MCF 10A (cell line): ENCODE measurements at regions of chr4 and their contacts with region 1.

Region 1: GRCh38 chr4:90293320-90293719 is 166.1 kb downstream of the CCSER1 start:
- DNase-seq: no peak
- H3K4me3 Mint-ChIP-seq: no peak overlapping the region
- H3K27ac Mint-ChIP-seq: no peak overlapping the region
- H3K4me1 Mint-ChIP-seq: no peaks in the 10 kb centered on the region
- H3K27me3 Mint-ChIP-seq: no peaks in the 10 kb centered on the region
- CTCF ChIP-seq: peak; percentile 54

Region 2: GRCh38 chr4:89914609-89915550 is 378.4 kb before region 1 on chr4:
- CTCF ChIA-PET with region 1: interaction called, 5 read pairs
- POLR2A ChIA-PET with region 1: no interaction called
- intact Hi-C with region 1: loop called (anchors 1 kb)
- DNase-seq: peak; percentile 21
- H3K4me3 Mint-ChIP-seq: peak overlapping the region; percentile 41
- H3K27ac Mint-ChIP-seq: no peak overlapping the region
- H3K4me1 Mint-ChIP-seq: peaks cover 21% of the 10 kb centered on the region
- H3K27me3 Mint-ChIP-seq: no peaks in the 10 kb centered on the region
- CTCF ChIP-seq: peak; percentile 13

Region 3: DNA sequence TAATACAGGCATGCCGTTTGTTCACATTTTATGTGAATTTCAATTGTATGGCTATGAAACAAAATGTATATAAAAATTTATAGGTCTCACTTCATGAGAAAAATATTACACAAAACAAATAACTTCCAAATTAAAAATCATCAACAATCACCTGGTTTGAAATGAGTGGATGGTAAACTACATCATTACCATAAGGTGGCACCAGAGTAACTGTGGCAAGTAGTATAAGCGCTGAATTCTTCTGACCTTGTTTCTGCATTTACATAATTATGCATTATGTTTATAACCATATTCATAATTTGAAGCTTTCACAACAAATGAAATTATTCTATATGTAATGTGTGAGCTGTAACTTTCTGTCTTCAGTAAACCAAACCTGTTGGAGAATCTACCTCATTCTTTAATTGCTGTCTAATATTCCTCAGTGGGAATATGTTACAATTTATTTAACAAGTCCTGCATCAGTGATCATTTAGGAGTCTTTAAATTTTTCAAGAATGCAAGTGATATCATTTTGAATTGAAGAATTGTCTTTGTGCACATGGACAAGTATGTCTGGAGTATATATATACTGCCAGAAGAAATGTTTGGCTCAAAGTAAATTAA is 343.4 kb before region 1 on chr4:
- CTCF ChIA-PET with region 1: no interaction called
- POLR2A ChIA-PET with region 1: no interaction called
- intact Hi-C with region 1: loop called (anchors 1 kb)
- DNase-seq: peak; percentile 21
- H3K4me3 Mint-ChIP-seq: no peak overlapping the region
- H3K27ac Mint-ChIP-seq: no peak overlapping the region
- H3K4me1 Mint-ChIP-seq: no peaks in the 10 kb centered on the region
- H3K27me3 Mint-ChIP-seq: no peaks in the 10 kb centered on the region
- CTCF ChIP-seq: peak; percentile 32

Region 4: GRCh38 chr4:90025248-90025647 is 268.1 kb before region 1 on chr4:
- CTCF ChIA-PET with region 1: interaction called, 15 read pairs
- POLR2A ChIA-PET with region 1: no interaction called
- intact Hi-C with region 1: loop called (anchors 1 kb)
- DNase-seq: peak; percentile 20
- H3K4me3 Mint-ChIP-seq: no peak overlapping the region
- H3K27ac Mint-ChIP-seq: no peak overlapping the region
- H3K4me1 Mint-ChIP-seq: no peaks in the 10 kb centered on the region
- H3K27me3 Mint-ChIP-seq: no peaks in the 10 kb centered on the region
- CTCF ChIP-seq: peak; percentile 14

Region 5: DNA sequence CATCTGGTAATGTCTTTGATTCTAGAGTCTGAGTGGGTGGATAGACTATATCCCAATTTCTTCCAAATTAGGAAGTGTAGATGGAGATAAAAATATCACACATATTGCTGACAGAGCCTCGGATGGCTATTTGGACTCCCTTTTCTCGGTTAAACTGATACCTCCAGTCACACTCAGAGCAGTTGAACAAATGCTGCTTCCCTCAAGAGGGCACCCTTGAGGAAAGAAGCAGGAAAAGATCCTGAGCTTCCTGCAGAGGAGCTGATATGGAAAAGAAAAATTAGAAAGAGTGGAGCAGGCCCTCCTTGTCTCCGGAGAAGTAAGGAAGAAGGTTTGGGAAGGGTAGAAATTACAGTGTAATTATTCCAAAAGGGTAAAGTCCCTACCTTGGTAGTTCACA is 262.4 kb before region 1 on chr4:
- CTCF ChIA-PET with region 1: interaction called, 15 read pairs
- POLR2A ChIA-PET with region 1: no interaction called
- intact Hi-C with region 1: no loop called
- DNase-seq: peak; percentile 27
- H3K4me3 Mint-ChIP-seq: no peak overlapping the region
- H3K27ac Mint-ChIP-seq: no peak overlapping the region
- H3K4me1 Mint-ChIP-seq: peaks cover 6% of the 10 kb centered on the region
- H3K27me3 Mint-ChIP-seq: no peaks in the 10 kb centered on the region
- CTCF ChIP-seq: no peak

Region 6: GRCh38 chr4:90120037-90120436 is 173.3 kb before region 1 on chr4:
- CTCF ChIA-PET with region 1: interaction called, 3 read pairs
- POLR2A ChIA-PET with region 1: no interaction called
- intact Hi-C with region 1: loop called (anchors 2 kb)
- DNase-seq: no peak
- H3K4me3 Mint-ChIP-seq: no peak overlapping the region
- H3K27ac Mint-ChIP-seq: no peak overlapping the region
- H3K4me1 Mint-ChIP-seq: no peaks in the 10 kb centered on the region
- H3K27me3 Mint-ChIP-seq: no peaks in the 10 kb centered on the region
- CTCF ChIP-seq: no peak